Activated B cell treated with CpG ODN at 0.5 μM for 24 hours (primary cell): ENCODE measurements at regions of chr9 and their contacts with region 1.

Region 1: GRCh38 chr9:19451240-19452087 is 42.7 kb downstream of the ACER2 start:
- DNase-seq: no peak
- ATAC-seq: peak; percentile 96
- H3K4me3 Mint-ChIP-seq: peak overlapping the region; percentile 85
- H3K27ac Mint-ChIP-seq: peak overlapping the region; percentile 95
- H3K4me1 Mint-ChIP-seq: peaks cover 16% of the 10 kb centered on the region
- H3K27me3 Mint-ChIP-seq: no peaks in the 10 kb centered on the region
- CTCF ChIP-seq: no peak

Region 2: DNA sequence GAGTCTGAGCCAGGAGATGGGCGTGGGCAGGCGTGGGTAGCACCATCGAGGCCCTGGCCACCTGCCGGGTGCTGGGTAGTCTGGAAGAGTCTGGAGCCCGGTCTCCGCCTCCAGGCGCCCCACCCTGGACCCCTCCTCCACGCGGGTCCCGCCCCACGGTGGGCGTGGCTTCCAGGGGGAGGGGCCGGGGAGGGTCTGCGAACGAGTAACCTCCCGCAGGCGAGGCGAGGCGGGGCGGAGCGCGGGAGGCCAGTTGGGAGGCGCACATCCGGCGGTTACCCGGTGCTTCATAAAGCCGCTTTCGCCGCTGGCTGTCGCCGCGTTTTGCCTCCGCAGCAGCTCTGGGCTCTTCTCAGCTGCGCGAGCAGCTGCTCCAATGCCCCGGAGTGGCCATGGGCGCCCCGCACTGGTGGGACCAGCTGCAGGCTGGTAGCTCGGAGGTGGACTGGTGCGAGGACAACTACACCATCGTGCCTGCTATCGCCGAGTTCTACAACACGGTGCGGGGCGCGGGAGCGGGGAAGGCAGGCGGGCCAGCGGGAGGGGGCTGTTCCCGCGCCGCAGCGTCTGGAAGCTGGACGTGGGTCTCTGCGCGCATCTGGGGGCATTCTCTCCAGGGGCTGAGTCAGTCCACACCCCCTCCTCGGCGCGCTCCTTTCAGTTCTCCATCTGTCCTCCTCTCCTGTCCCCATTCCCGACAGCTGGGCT is 42.6 kb before region 1 on chr9 and contains the start of gene ACER2:
- CTCF ChIA-PET with region 1: no interaction called
- POLR2A ChIA-PET with region 1: interaction called, 5 read pairs
- intact Hi-C with region 1: loop called (anchors 1 kb)
- DNase-seq: peak; percentile 99
- ATAC-seq: peak; percentile 97
- H3K4me3 Mint-ChIP-seq: peak within 1 kb of the TSS; percentile 94
- H3K27ac Mint-ChIP-seq: peak within 1 kb of the TSS; percentile 69
- H3K4me1 Mint-ChIP-seq: peaks cover 12% of the 10 kb centered on the region
- H3K27me3 Mint-ChIP-seq: no peaks in the 10 kb centered on the region
- CTCF ChIP-seq: no peak
- total RNA-seq, gene ACER2: 1.4 and 2.0 TPM in 2 replicates